ENCODE measurements at regions of chr21 and their contacts with region 1.

Region 1: GRCh38 chr21:36989699-36990507 is 16.6 kb upstream of the RIPPLY3 start:
- DNase-seq: peak; percentile 95 to 98
- ATAC-seq: peak; percentile 95 to 96 (median 95)
- H3K4me3 ChIP-seq: peak overlapping the region; percentile 86
- H3K27ac ChIP-seq: peak overlapping the region; percentile 99
- H3K4me1 ChIP-seq: no peaks in the 10 kb centered on the region
- H3K27me3 ChIP-seq: peaks cover 0 to 4% (median 2%) of the 10 kb centered on the region in 3 donors
- CTCF ChIP-seq: peak; percentile 97

Region 2: DNA sequence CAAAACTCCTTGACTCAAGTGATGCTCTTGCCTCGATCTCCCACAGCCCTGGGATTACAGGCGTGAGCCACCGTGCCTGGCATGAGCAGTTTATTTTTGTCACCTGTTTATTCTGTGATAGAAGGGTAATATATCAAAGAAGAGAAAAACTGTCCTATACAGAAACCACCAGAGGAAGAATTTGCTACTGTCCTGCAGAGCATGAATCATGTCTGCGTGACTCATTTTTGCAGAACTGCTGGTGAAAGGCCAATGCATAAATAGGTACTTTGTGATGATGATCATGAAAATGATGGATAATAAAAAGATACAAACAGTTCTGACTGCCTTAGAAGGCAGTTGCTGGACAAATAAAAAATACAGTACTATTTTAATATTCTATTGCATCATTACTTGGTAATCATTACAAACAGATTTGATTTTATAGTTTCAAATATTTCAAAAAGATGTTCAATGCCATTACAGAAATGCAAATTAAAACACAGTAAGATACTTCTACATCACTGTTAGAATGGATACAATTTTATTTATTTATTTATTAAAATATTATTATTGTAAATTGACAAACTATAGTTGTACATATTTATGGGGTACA is 43.1 kb after region 1 on chr21:
- intact Hi-C with region 1: no loop called
- DNase-seq: no peak
- ATAC-seq: no peak
- H3K4me3 ChIP-seq: no peak overlapping the region
- H3K27ac ChIP-seq: no peak overlapping the region
- H3K4me1 ChIP-seq: no peaks in the 10 kb centered on the region
- H3K27me3 ChIP-seq: no peaks in the 10 kb centered on the region
- CTCF ChIP-seq: no peak

Region 3: GRCh38 chr21:37072988-37073416 is 83.1 kb after region 1 on chr21 and contains the starts of genes PIGP and TTC3:
- intact Hi-C with region 1: loop called in 1 of 2 experiments (anchors 5 kb)
- DNase-seq: peak; percentile 96 to 97
- ATAC-seq: peak; percentile 86 to 90 (median 88)
- H3K4me3 ChIP-seq: peak within 1 kb of the TSS; percentile 78
- H3K27ac ChIP-seq: peak within 1 kb of the TSS; percentile 95
- H3K4me1 ChIP-seq: peaks cover 15% of the 10 kb centered on the region
- H3K27me3 ChIP-seq: no peaks in the 10 kb centered on the region
- CTCF ChIP-seq: no peak
- total RNA-seq, gene PIGP: 26.6 to 46.9 (median 34.4) TPM
- total RNA-seq, gene TTC3: 22.2 to 50.3 (median 30.0) TPM